ENCODE measurements at regions of chr3 and their contacts with region 1.

Region 1: GRCh38 chr3:149114458-149114857 is 15.0 kb upstream of the HPS3 start:
- DNase-seq: no peak
- H3K4me3 ChIP-seq: no peak overlapping the region
- H3K27ac ChIP-seq: no peak overlapping the region
- H3K4me1 ChIP-seq: peaks cover 7% of the 10 kb centered on the region in 2 donors
- H3K27me3 ChIP-seq: no peaks in the 10 kb centered on the region
- CTCF ChIP-seq: no peak
- POLR2A ChIP-seq: no peak

Region 2: GRCh38 chr3:148955544-148956346 is 158.7 kb before region 1 on chr3:
- intact Hi-C with region 1: loop called (anchors 5 kb)
- DNase-seq: peak; percentile 49 to 51
- H3K4me3 ChIP-seq: no peak overlapping the region
- H3K27ac ChIP-seq: peak overlapping the region; percentile 65 to 87 (median 78)
- H3K4me1 ChIP-seq: peaks cover 5 to 7% of the 10 kb centered on the region in 2 donors
- H3K27me3 ChIP-seq: no peaks in the 10 kb centered on the region
- CTCF ChIP-seq: peak in 5 of 6 experiments; percentile 29 to 77 (median 54)
- POLR2A ChIP-seq: peak in 1 of 2 donors; percentile 39

Region 3: DNA sequence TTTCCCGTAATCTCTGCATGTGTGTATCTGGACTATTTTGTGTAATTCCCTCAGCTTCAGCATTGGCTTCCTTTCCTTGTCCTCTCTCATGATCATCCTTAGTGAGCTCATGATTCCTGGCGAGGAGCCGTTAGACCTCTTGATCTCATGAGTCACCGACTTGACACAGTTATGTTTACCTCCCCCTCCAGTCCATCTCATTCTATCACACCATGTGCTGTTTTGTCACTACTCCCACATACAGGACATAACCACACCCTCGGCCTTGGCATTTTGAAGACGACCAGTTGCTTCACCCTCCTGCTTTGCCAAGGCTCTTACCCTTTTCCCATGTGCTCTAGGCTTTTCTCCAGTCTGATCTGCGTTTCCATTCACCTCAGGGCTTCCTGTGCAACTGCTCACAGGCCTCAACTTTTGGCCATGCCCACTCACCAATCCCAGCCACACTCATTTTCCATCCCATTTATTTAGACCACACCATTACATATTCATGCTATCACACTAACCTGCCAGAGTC is 65.7 kb after region 1 on chr3:
- intact Hi-C with region 1: no loop called
- DNase-seq: peak; percentile 61 to 83
- H3K4me3 ChIP-seq: no peak overlapping the region
- H3K27ac ChIP-seq: peak overlapping the region; percentile 20 to 67 (median 47)
- H3K4me1 ChIP-seq: peaks cover 0 to 31% of the 10 kb centered on the region in 2 donors
- H3K27me3 ChIP-seq: no peaks in the 10 kb centered on the region
- CTCF ChIP-seq: no peak
- POLR2A ChIP-seq: no peak

Region 4: DNA sequence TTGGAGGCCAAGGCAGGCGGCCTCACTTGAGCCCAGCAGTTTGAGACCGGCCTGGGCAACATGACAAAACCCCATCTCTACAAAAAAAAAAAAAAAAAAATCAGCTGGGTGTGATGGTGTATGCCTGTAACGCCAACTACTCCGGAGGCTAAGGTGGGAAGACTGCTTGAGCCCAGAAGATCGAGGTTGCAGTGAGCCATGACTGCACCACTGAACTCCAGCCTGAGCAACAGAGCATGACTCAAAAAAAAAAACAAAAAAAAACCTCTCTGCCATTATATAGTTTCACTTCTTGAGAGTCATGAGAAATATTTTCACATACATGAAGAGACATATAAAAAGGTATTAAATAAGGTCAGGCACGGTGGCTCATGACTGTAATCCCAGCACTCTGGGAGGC is 153.1 kb after region 1 on chr3:
- intact Hi-C with region 1: loop called (anchors 5 kb)
- DNase-seq: peak; percentile 25 to 51
- H3K4me3 ChIP-seq: no peak overlapping the region
- H3K27ac ChIP-seq: no peak overlapping the region
- H3K4me1 ChIP-seq: no peaks in the 10 kb centered on the region
- H3K27me3 ChIP-seq: no peaks in the 10 kb centered on the region
- CTCF ChIP-seq: no peak
- POLR2A ChIP-seq: no peak